Body of pancreas (tissue), 4 donors: ENCODE measurements at regions of chr20 and their contacts with region 1.

Region 1: DNA sequence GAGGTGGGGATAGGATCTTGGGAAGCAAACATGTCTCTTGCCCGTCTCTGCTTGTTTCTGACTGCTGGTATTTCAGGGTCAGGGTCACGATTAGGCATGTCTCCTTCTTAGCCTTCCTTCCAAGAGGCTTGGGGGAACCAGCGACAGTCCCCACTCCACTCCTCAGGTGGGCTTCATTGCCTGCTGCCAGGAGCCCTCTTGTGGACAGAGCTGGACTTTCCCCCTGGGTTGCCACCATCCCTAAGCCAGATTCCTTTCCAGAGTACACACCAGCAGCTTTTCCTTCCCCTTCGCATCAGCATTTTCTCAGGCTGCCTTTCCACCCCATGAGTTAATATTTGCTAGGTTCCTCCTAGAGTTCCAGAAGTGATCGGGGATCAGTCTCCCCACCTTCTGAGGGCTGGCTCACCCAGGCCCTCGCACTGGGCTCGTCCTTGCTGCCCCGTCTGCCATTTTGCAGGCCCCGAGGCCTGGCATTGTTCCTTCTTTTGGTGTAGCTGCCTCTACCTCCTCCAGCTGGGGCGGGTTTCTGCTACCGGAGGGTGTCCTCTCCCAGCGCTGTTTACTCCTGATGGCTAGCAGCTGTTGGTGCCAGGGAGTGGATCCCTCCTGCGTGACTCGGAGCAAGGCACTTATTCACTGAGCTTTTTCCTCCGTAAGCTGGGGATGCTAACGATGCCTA is 8.8 kb upstream of the C20orf144 start:
- DNase-seq: peak; percentile 67 to 81 (median 74)
- ATAC-seq: peak; percentile 62
- H3K4me3 ChIP-seq: no peak overlapping the region
- H3K27ac ChIP-seq: peak overlapping the region; percentile 84 to 93 (median 88)
- H3K4me1 ChIP-seq: peaks cover 31% of the 10 kb centered on the region
- H3K27me3 ChIP-seq: no peaks in the 10 kb centered on the region
- CTCF ChIP-seq: peak; percentile 54 to 90 (median 67)
- POLR2A ChIP-seq: peak in 1 of 3 donors; percentile 8

Region 2: DNA sequence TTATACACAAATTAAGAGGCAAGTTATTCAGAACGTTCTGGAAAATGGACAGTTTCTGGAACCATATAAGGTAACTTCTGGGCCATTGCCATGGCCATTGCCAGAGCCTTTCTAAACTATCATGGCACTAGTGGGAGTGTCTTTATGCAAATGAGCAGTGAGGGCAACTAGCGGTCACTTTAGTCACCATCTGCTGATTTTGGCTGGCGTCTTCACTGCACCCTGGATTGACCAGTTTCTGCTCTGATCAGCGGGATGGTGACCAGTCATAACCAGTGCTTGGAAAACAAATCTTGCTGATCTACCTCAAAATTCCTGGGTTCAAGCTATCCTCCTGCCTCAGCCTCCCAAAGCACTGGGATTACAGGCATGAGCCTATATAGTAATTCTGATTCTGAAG is 202.5 kb before region 1 on chr20:
- intact Hi-C with region 1: loop called (anchors 10 kb)
- DNase-seq: peak in 1 of 4 donors; percentile 14
- ATAC-seq: peak; percentile 12
- H3K4me3 ChIP-seq: no peak overlapping the region
- H3K27ac ChIP-seq: no peak overlapping the region
- H3K4me1 ChIP-seq: no peaks in the 10 kb centered on the region
- H3K27me3 ChIP-seq: no peaks in the 10 kb centered on the region
- CTCF ChIP-seq: no peak
- POLR2A ChIP-seq: no peak

Region 3: GRCh38 chr20:33917831-33918525 is 264.6 kb after region 1 on chr20:
- intact Hi-C with region 1: no loop called
- DNase-seq: no peak
- ATAC-seq: no peak
- H3K4me3 ChIP-seq: no peak overlapping the region
- H3K27ac ChIP-seq: no peak overlapping the region
- H3K4me1 ChIP-seq: no peaks in the 10 kb centered on the region
- H3K27me3 ChIP-seq: no peaks in the 10 kb centered on the region
- CTCF ChIP-seq: no peak
- POLR2A ChIP-seq: no peak

Region 4: GRCh38 chr20:34037121-34037520 is 383.8 kb after region 1 on chr20:
- intact Hi-C with region 1: no loop called
- DNase-seq: peak in 1 of 4 donors; percentile 11
- ATAC-seq: no peak
- H3K4me3 ChIP-seq: no peak overlapping the region
- H3K27ac ChIP-seq: no peak overlapping the region
- H3K4me1 ChIP-seq: peaks cover 37% of the 10 kb centered on the region
- H3K27me3 ChIP-seq: no peaks in the 10 kb centered on the region
- CTCF ChIP-seq: no peak
- POLR2A ChIP-seq: no peak